Endothelial cell of umbilical vein (primary cell): ENCODE measurements at regions of chr3 and their contacts with region 1.

Region 1: DNA sequence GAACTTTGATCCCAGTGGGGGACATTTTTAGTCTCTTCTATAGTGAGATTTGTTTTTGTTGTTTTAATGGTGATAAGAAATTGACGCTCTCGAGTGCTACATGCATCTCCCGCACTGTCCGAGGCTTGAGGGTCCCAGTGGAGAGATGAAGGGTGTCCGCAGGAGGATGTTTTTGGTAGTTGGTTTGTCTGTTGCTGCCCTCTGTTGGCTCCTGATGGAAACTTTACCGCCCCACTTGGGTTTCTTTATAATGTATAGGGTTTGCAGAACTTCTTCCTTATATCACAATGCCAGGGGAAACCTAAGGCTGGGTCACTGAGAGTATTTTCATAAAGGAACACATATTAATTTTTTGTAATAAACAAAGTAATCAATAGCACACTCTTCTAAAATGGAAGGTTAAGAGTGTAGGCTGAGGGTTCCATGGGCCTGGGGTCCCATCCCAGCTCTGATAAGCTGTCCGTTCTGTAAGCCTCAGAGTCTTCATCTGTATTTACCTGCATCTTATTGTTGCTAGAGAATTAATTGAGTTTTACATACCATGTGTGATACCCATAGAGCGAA is 185.3 kb upstream of the FEZF2 start:
- DNase-seq: peak; percentile 29
- H3K4me3 ChIP-seq: no peak overlapping the region
- H3K27ac ChIP-seq: no peak overlapping the region
- H3K4me1 ChIP-seq: peaks cover 22% of the 10 kb centered on the region
- H3K27me3 ChIP-seq: no peaks in the 10 kb centered on the region
- CTCF ChIP-seq: peak; percentile 50 to 58
- POLR2A ChIP-seq: no peak

Region 2: GRCh38 chr3:62201438-62202035 is 357.1 kb before region 1 on chr3:
- CTCF ChIA-PET with region 1: interaction called, 6 read pairs
- POLR2A ChIA-PET with region 1: no interaction called
- dilution Hi-C with region 1: no loop called
- intact Hi-C with region 1: loop called (anchors 1 kb)
- DNase-seq: peak; percentile 59
- H3K4me3 ChIP-seq: no peak overlapping the region
- H3K27ac ChIP-seq: no peak overlapping the region
- H3K4me1 ChIP-seq: no peaks in the 10 kb centered on the region
- H3K27me3 ChIP-seq: no peaks in the 10 kb centered on the region
- CTCF ChIP-seq: peak; percentile 36 to 40
- POLR2A ChIP-seq: no peak

Region 3: DNA sequence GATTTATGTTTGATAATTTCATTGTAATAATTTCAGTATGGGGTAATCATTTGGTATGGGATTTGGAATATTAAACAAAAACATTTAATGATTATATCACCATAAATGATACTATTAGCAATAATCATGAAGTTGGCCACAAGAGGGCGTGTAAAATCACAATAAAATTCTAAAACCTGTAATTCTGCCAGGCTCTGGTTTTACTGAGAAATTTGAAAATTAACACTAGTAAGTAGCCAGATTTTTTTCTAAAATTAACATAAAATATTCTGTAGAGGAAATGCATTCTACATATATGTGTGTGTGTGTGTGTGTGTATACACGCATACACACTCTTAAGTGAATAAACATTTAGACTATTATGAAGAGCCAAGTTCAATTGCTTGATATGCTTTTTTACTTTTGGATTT is 225.8 kb before region 1 on chr3:
- CTCF ChIA-PET with region 1: interaction called, 23 read pairs
- POLR2A ChIA-PET with region 1: no interaction called
- dilution Hi-C with region 1: no loop called
- intact Hi-C with region 1: loop called (anchors 1 kb)
- DNase-seq: peak; percentile 21
- H3K4me3 ChIP-seq: no peak overlapping the region
- H3K27ac ChIP-seq: no peak overlapping the region
- H3K4me1 ChIP-seq: no peaks in the 10 kb centered on the region
- H3K27me3 ChIP-seq: no peaks in the 10 kb centered on the region
- CTCF ChIP-seq: peak; percentile 24 to 40
- POLR2A ChIP-seq: no peak

Region 4: GRCh38 chr3:62415312-62415801 is 143.3 kb before region 1 on chr3:
- CTCF ChIA-PET with region 1: no interaction called
- POLR2A ChIA-PET with region 1: no interaction called
- dilution Hi-C with region 1: no loop called
- intact Hi-C with region 1: no loop called
- DNase-seq: no peak
- H3K4me3 ChIP-seq: no peak overlapping the region
- H3K27ac ChIP-seq: no peak overlapping the region
- H3K4me1 ChIP-seq: no peaks in the 10 kb centered on the region
- H3K27me3 ChIP-seq: peaks cover 0 to 3% of the 10 kb centered on the region in 2 experiments
- CTCF ChIP-seq: no peak
- POLR2A ChIP-seq: no peak

Region 5: GRCh38 chr3:62587203-62588117 is 28.8 kb after region 1 on chr3:
- CTCF ChIA-PET with region 1: interaction called, 15 read pairs
- POLR2A ChIA-PET with region 1: interaction called, 3 read pairs
- dilution Hi-C with region 1: no loop called
- intact Hi-C with region 1: loop called (anchors 1 kb)
- DNase-seq: peak; percentile 72
- H3K4me3 ChIP-seq: no peak overlapping the region
- H3K27ac ChIP-seq: peak overlapping the region; percentile 79
- H3K4me1 ChIP-seq: peaks cover 38% of the 10 kb centered on the region
- H3K27me3 ChIP-seq: no peaks in the 10 kb centered on the region
- CTCF ChIP-seq: no peak
- POLR2A ChIP-seq: peak; percentile 69

Region 6: DNA sequence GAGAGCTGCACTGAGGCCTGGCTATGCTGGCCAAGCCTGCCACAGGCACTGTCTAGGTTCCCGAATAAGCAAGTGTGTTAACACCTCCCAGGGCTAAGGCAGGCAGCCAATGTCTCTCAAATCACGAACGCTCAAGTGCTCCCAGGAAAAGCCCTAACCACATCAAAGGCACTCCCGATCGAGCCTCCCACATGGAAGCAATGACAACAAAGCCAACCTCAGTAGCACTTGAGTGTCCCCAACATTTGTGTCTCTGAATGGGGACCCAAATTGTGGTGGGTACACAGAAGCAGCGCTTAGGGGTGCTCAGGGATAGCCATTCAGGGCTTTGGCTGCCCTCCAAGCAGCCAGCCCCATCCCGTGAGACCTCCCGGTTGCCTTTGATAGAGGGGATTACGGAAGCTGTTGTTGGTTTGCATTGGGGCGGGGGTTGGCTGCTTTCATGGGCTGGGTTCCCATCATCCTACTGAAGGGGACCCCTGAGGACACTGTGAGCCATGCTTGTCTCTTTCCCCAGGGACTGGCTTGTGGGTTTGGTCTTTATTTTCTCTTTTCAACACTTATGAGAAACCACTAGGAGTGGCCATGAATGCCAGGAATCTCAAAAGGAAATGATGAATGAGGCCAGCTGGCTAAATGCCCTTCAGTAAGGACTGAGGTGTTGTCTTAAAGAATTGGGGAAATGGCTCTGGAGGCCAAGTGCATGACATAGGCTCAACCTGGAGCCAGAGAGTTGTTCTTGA is 48.8 kb after region 1 on chr3:
- CTCF ChIA-PET with region 1: interaction called, 17 read pairs
- POLR2A ChIA-PET with region 1: interaction called, 8 read pairs
- dilution Hi-C with region 1: no loop called
- intact Hi-C with region 1: no loop called
- DNase-seq: peak; percentile 85
- H3K4me3 ChIP-seq: no peak overlapping the region
- H3K27ac ChIP-seq: peak overlapping the region; percentile 77
- H3K4me1 ChIP-seq: peaks cover 52% of the 10 kb centered on the region
- H3K27me3 ChIP-seq: no peaks in the 10 kb centered on the region
- CTCF ChIP-seq: no peak
- POLR2A ChIP-seq: no peak